ENCODE measurements at regions of chr9 and their contacts with region 1.

Region 1: GRCh38 chr9:83920927-83921707 is at the start of gene KIF27:
- DNase-seq: peak; percentile 91 to 99 (median 93)
- ATAC-seq: peak; percentile 94
- H3K4me3 ChIP-seq: peak within 1 kb of the TSS; percentile 59
- H3K4me3 Mint-ChIP-seq: peak within 1 kb of the TSS; percentile 87 to 96 (median 92)
- H3K27ac ChIP-seq: peak within 1 kb of the TSS; percentile 96
- H3K27ac Mint-ChIP-seq: peak within 1 kb of the TSS; percentile 89 to 98 (median 96)
- H3K4me1 ChIP-seq: peaks cover 4 to 8% of the 10 kb centered on the region in 2 donors
- H3K4me1 Mint-ChIP-seq: peaks cover 0 to 20% (median 13%) of the 10 kb centered on the region in 7 donors
- H3K27me3 ChIP-seq: no peaks in the 10 kb centered on the region
- H3K27me3 Mint-ChIP-seq: no peaks in the 10 kb centered on the region
- total RNA-seq, gene KIF27: 3.5 to 6.7 (median 5.3) TPM

Region 2: DNA sequence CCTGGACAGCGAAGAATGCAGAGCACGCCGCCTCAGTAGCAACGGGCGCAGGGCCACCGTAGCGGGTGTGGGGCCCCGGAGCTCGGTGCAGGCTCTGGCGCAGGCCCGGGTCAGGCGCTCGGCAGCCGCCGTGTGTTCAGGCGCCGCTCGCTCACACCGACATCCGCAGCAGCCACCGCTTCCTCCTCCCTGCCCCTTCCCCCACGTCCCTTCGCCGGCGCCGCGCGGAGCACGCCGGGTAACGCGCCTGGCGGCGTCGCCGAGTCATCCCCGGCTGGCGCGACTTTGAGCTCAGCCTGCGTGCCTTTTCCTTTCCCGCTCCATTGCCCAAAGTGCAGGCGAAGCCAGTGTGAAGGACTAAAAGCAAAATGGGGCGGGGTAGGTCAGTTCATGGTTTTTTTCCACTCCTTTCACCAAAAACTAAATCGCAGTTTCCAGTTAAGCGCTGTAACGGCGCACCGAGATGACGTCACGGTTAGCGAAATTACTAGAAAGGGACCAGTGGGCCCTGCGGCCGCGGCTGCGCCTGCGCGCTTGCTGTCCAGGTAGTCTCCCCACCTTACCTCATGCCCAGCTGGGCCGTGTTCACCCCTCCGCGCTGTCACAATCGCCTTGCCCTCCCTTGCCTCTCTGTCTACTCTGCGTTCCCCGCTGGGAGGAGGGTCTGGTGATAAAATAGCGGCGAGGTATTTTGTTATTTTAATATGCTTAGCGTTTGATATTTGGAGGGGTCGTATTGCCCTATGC is 213.2 kb before region 1 on chr9 and contains the start of gene UBQLN1:
- CTCF ChIA-PET with region 1: no interaction called
- POLR2A ChIA-PET with region 1: interaction called, 20 read pairs
- intact Hi-C with region 1: loop called (anchors 1 kb)
- DNase-seq: peak; percentile 91 to 97 (median 95)
- ATAC-seq: peak; percentile 91
- H3K4me3 ChIP-seq: peak within 1 kb of the TSS; percentile 79
- H3K4me3 Mint-ChIP-seq: peak within 1 kb of the TSS; percentile 81 to 99 (median 87)
- H3K27ac ChIP-seq: peak within 1 kb of the TSS; percentile 93
- H3K27ac Mint-ChIP-seq: peak within 1 kb of the TSS; percentile 95 to 100 (median 100)
- H3K4me1 ChIP-seq: peaks cover 27% of the 10 kb centered on the region in 2 donors
- H3K4me1 Mint-ChIP-seq: peaks cover 30 to 55% (median 49%) of the 10 kb centered on the region in 7 donors
- H3K27me3 ChIP-seq: no peaks in the 10 kb centered on the region
- H3K27me3 Mint-ChIP-seq: peaks cover 0 to 6% (median 0%) of the 10 kb centered on the region in 5 donors
- total RNA-seq, gene UBQLN1: 104 to 139 (median 114) TPM

Region 3: DNA sequence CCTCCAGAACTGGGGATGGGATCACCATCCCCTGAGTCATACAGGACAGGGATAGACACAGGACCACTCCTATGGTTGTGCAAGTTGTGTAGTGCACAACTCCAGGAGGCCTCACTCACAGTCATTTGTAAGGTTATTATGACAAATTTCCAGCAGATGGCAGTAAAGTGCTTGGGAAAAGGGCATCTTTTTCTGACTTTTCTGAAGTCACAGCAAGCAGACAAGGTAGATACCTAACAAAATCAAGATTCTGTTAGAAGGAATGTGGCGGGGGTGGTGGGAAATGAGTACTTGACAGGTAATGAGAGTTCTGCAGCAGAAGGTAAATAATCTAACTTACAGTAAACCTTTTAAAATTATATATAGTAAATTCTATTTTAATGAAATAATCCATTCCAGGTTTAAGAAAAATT is 16.8 kb after region 1 on chr9:
- CTCF ChIA-PET with region 1: interaction called, 6 read pairs
- POLR2A ChIA-PET with region 1: interaction called, 5 read pairs
- intact Hi-C with region 1: loop called in 1 of 2 experiments (anchors 1 kb)
- DNase-seq: peak in 7 of 9 donors; percentile 44 to 74 (median 66)
- ATAC-seq: peak; percentile 84
- H3K4me3 ChIP-seq: no peak overlapping the region
- H3K4me3 Mint-ChIP-seq: no peak overlapping the region
- H3K27ac ChIP-seq: no peak overlapping the region
- H3K27ac Mint-ChIP-seq: no peak overlapping the region
- H3K4me1 ChIP-seq: no peaks in the 10 kb centered on the region
- H3K4me1 Mint-ChIP-seq: peaks cover 0 to 19% (median 0%) of the 10 kb centered on the region in 7 donors
- H3K27me3 ChIP-seq: no peaks in the 10 kb centered on the region
- H3K27me3 Mint-ChIP-seq: no peaks in the 10 kb centered on the region

Region 4: DNA sequence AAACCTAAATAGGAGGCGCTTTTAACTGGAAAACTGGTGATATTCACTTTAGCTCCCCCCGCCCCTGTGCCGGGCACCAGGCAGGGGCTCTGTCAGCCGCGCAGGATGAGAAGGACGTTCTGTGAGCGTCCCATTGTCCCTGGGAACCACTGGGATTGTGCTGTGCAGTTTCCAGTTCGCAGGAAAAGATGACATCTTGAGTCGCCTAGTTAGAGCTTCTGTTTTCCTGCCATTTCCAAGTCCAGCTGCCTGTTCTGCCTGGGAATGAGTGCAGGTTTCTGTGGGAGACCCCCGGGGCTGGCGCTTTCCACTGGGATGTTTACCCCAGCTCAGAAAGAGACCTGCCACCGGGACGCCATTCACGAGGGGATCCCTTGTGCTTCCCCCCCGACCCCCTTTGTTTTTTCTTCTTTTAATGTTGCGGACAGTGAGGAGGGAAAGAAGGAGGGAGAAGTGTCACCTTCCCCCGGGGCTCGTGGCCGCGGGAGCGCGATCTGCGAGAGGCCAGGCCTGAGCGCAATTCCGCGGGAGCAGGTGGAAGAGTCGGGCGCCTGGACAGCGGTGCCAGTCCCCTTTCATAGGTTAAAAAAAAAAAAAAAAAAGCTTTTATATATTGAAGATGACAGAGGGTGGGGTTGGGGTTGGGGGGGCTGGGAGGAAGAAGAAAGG is 181.0 kb after region 1 on chr9:
- CTCF ChIA-PET with region 1: no interaction called
- POLR2A ChIA-PET with region 1: no interaction called
- intact Hi-C with region 1: no loop called
- DNase-seq: no peak
- ATAC-seq: no peak
- H3K4me3 ChIP-seq: no peak overlapping the region
- H3K4me3 Mint-ChIP-seq: no peak overlapping the region
- H3K27ac ChIP-seq: no peak overlapping the region
- H3K27ac Mint-ChIP-seq: no peak overlapping the region
- H3K4me1 ChIP-seq: no peaks in the 10 kb centered on the region
- H3K4me1 Mint-ChIP-seq: peaks cover 0 to 7% (median 1%) of the 10 kb centered on the region in 7 donors
- H3K27me3 ChIP-seq: peaks cover 0 to 3% of the 10 kb centered on the region in 2 donors
- H3K27me3 Mint-ChIP-seq: peaks cover 41 to 61% (median 51%) of the 10 kb centered on the region in 5 donors

Region 5: DNA sequence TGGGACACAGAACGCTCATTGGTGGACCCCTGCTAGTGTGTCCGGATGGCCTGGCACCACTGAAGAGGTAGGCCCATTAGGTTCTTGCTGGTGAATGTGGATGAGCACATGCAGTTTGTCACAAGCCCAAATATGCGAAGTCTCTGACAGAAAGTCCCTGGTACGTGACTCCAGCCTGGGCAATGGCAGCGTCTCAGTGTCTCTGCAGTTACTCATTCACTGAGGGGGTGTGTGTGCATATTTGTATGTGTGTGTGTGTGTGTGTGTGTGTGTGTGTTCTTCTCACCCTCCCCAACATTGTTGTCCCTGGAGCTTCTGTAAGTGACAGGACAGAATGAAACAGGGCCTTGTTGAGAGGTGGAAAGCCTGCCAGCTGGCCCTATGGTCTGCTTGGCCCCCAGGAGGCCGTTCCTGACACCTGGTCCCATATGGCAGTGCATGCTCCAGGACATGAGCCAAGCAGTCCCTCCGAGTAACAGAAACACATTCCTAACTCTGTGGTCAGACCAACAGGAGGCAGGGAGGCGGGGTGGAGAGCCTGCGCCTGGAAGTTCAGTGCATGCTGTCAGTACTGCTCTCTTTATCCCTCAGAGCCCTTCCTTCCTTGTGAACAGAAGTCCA is 249.5 kb after region 1 on chr9:
- CTCF ChIA-PET with region 1: interaction called, 4 read pairs
- POLR2A ChIA-PET with region 1: no interaction called
- intact Hi-C with region 1: loop called in 1 of 2 experiments (anchors 5 kb)
- DNase-seq: no peak
- ATAC-seq: no peak
- H3K4me3 ChIP-seq: no peak overlapping the region
- H3K4me3 Mint-ChIP-seq: no peak overlapping the region
- H3K27ac ChIP-seq: no peak overlapping the region
- H3K27ac Mint-ChIP-seq: no peak overlapping the region
- H3K4me1 ChIP-seq: no peaks in the 10 kb centered on the region
- H3K4me1 Mint-ChIP-seq: peaks cover 0 to 5% (median 0%) of the 10 kb centered on the region in 7 donors
- H3K27me3 ChIP-seq: no peaks in the 10 kb centered on the region
- H3K27me3 Mint-ChIP-seq: peaks cover 0 to 8% (median 5%) of the 10 kb centered on the region in 5 donors

Region 6: DNA sequence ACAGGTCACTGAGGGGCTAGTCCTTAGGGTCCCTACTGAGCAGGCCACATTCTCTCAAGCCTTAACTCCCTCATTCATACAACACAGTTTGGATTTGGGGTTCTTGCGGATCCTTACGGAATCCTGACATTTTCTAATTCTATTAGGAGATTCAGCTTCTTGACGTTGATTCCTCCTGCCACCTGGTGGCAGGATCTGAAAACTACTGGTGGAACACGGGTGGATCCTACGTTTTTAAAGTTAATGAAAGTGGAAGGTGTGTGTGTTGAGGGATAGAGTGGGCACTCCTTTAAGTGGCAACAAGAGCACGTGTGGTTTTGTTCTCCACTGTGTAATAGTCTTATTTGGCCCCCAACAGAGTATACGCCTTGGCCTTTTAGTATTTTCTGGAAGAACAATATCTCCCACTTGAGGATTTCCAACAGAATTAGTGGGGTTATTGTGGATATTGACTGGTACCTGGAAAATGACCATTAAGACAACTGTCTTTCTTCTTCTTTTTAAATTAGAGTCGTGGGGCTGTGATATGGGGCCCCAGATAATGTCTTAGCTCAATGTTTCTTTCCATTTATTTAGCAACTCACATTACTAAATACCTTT is 394.3 kb after region 1 on chr9:
- CTCF ChIA-PET with region 1: no interaction called
- POLR2A ChIA-PET with region 1: interaction called, 3 read pairs
- intact Hi-C with region 1: loop called in 1 of 2 experiments (anchors 5 kb)
- DNase-seq: peak; percentile 9 to 49 (median 39)
- ATAC-seq: peak; percentile 73
- H3K4me3 ChIP-seq: no peak overlapping the region
- H3K4me3 Mint-ChIP-seq: peak overlapping the region in 1 of 10 donors; percentile 13
- H3K27ac ChIP-seq: no peak overlapping the region
- H3K27ac Mint-ChIP-seq: no peak overlapping the region
- H3K4me1 ChIP-seq: no peaks in the 10 kb centered on the region
- H3K4me1 Mint-ChIP-seq: peaks cover 0 to 35% (median 0%) of the 10 kb centered on the region in 7 donors
- H3K27me3 ChIP-seq: no peaks in the 10 kb centered on the region
- H3K27me3 Mint-ChIP-seq: no peaks in the 10 kb centered on the region

Measured in naive thymus-derived CD4-positive, alpha-beta T cell (primary cell).